ENCODE measurements at regions of chr5 and their contacts with region 1.

Region 1: DNA sequence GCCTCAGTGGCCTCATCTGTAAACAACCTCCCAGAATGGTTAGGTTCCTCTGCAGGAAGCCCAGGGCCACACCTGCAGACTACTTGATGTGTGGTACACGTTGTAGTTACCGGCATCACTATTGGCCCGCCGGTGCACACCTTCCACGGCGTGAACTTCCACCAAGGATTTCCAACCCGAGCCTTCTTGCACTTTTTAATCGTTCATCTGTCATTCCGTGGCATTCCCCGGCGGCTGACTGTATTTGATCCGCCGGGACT is 5.3 kb upstream of the TRIM41 start:
- DNase-seq: no peak
- H3K4me3 ChIP-seq: peak overlapping the region; percentile 30 to 53 (median 43)
- H3K27ac ChIP-seq: peak overlapping the region; percentile 67 to 77 (median 74)
- H3K4me1 ChIP-seq: peaks cover 0 to 37% (median 29%) of the 10 kb centered on the region in 4 donors
- H3K27me3 ChIP-seq: no peaks in the 10 kb centered on the region
- CTCF ChIP-seq: no peak
- EP300 ChIP-seq: no peak
- POLR2A ChIP-seq: no peak

Region 2: GRCh38 chr5:181043285-181044092 is 174.2 kb before region 1 on chr5:
- intact Hi-C with region 1: no loop called
- DNase-seq: no peak
- H3K4me3 ChIP-seq: no peak overlapping the region
- H3K27ac ChIP-seq: peak overlapping the region in 1 of 4 donors; percentile 27
- H3K4me1 ChIP-seq: no peaks in the 10 kb centered on the region
- H3K27me3 ChIP-seq: peaks cover 0 to 51% (median 24%) of the 10 kb centered on the region in 3 donors
- CTCF ChIP-seq: no peak
- EP300 ChIP-seq: no peak
- POLR2A ChIP-seq: no peak

Region 3: DNA sequence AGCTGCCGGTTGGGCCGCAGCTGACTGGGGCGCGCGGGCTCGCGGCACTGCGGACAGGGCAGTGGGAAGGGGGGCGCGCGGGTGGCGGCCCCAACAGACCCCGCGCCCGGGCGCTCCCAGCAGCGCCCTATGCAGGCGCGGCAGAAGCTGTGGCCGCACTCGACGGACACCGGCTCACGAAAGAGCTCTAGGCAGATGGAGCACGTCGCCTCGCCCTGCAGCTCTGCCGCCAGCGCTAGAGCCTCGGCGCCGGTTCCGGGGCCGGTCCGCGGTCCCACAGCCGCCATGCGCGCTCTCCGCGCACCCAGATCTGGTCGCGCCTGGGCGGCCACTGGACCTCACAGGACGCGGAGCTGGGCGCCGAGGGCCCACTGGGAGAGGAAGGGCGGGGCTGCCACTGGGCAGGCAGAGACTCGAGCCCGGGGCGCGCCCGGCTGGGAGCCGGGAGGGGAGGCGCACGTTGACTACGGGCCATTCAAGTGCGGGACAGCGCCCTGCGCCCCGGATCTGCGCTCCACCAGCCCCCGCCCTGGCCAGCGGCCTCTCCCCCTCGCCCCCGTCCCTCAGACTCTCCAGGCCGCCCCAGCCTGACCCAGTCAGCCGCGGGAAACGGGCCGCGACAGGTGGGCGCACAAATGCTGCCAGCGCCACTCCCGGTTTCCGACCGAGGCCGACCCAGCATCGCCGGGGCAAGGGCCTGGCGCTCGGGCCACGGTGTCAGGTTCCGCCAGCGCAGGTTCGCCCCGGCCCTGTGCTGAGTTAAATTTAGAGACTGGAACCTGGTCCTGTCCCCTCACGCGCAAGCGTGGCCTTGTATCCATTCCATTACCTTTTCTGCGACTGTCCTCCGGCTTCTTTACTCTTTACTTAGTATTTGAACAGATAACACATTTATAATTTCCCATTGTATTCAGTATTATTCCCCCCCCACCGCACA is 12.6 kb before region 1 on chr5 and contains the start of gene TRIM7:
- intact Hi-C with region 1: loop called (anchors 1 kb)
- DNase-seq: peak; percentile 76
- H3K4me3 ChIP-seq: peak within 1 kb of the TSS; percentile 42 to 71 (median 62)
- H3K27ac ChIP-seq: peak within 1 kb of the TSS; percentile 71 to 85 (median 83)
- H3K4me1 ChIP-seq: peaks cover 0 to 38% (median 36%) of the 10 kb centered on the region in 4 donors
- H3K27me3 ChIP-seq: peaks cover 0 to 12% (median 11%) of the 10 kb centered on the region in 3 donors
- CTCF ChIP-seq: no peak
- EP300 ChIP-seq: no peak
- POLR2A ChIP-seq: no peak
- total RNA-seq, gene TRIM7: 0.55 to 2.1 (median 1.1) TPM